ENCODE measurements at regions of chr13 and their contacts with region 1.

Region 1: DNA sequence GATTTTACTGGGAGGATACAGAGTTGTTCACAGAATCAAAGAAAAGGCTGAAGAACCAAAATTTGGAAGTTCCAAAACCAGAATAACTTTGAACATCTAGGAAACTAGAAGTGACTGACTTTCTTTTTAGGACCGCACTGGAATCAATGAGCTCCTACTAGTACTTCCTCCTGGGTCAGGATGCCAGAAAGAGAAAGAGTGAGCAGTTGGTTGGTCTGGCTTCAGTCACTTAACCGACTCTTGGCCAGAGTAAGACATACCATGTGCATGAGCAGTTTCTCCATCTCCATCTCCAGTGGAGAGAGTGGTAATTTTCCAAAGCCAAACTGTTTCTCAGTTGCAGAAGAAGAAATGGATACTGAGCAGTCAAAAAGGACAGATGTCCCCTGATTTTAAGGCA is 27.1 kb upstream of the MTUS2 start:
- DNase-seq: no peak
- H3K4me3 ChIP-seq: no peak overlapping the region
- H3K27ac ChIP-seq: peak overlapping the region in 1 of 2 donors; percentile 21
- H3K4me1 ChIP-seq: peaks cover 0 to 2% of the 10 kb centered on the region in 2 donors
- H3K27me3 ChIP-seq: no peaks in the 10 kb centered on the region
- CTCF ChIP-seq: no peak

Region 2: DNA sequence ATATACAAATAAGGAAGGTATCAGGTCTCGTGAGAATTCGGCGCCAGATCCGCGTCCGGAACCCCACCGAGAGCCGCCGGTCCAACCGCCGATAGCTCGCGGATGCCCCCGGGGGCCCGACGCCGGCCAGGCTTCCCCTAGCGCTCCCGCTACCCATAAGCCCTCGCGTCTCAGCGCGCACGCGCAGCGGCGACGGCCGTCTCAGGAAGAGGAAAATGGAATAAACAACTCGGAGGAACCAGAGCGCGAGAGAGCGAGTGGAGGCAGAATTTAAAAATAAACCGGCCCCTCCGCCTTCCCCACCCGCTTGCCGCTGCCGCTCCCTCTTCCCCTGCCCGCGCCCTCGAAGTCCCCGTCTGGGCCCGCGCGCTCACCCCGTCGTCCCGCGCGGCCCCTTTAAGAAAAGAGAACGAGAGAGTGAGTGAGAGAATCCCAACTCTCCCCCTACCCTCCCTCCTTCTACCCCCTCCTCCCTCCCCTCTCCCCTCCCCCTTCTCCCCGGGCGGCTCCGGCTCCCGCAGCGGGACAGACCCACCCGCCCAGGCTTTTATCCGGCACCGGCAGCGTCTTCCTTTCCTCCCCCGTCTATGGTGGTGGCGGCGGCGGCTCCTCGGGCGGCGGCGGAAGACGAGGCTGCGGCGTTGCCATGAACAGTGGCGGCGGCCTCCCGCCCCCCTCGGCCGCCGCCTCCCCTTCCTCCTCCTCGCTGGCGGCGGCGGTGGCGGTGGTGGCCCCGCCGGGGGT is 654.8 kb before region 1 on chr13 and contains the start of gene PAN3:
- intact Hi-C with region 1: loop called (anchors 10 kb)
- DNase-seq: peak; percentile 72 to 96
- H3K4me3 ChIP-seq: peak within 1 kb of the TSS; percentile 81 to 95
- H3K27ac ChIP-seq: peak within 1 kb of the TSS; percentile 90 to 100
- H3K4me1 ChIP-seq: peaks cover 0 to 16% of the 10 kb centered on the region in 2 donors
- H3K27me3 ChIP-seq: no peaks in the 10 kb centered on the region
- CTCF ChIP-seq: peak in 1 of 3 experiments; percentile 10
- total RNA-seq, gene PAN3: 34.5 TPM

Region 3: DNA sequence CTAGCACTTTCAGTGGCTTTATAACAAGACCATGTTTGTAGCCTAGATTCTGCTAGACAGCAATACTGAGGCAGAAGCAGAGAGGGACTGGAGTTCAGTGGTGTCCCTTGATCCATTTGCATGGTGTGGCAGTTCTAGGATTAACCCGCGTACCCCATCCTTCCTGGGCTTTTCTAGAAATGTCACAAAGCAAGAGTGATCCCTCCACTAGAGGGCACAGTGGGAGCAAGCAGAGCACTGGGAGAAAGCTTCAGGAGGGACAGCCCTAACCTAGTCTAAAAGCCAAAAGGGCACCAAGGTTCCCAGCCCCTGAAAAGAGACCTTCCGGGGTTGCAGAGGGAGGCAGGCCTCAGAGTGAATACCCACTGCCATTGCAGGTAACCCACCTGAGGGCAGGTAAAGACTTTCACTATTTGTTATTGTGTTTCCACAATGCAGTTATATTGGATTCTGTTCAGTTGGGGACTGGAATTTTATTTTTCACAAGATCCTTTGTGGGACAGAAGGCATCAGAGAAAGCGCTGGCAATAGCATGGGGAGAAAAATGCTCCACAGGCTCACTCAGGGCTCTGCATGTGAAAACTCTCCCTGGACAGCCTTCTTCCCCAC is 468.7 kb before region 1 on chr13:
- intact Hi-C with region 1: loop called (anchors 5 kb)
- DNase-seq: peak in 1 of 2 donors; percentile 72
- H3K4me3 ChIP-seq: no peak overlapping the region
- H3K27ac ChIP-seq: no peak overlapping the region
- H3K4me1 ChIP-seq: peaks cover 0 to 4% of the 10 kb centered on the region in 2 donors
- H3K27me3 ChIP-seq: no peaks in the 10 kb centered on the region
- CTCF ChIP-seq: peak; percentile 40 to 71 (median 48)

Region 4: GRCh38 chr13:28658796-28659620 is 134.0 kb before region 1 on chr13 and contains the start of gene POMP:
- intact Hi-C with region 1: loop called (anchors 5 kb)
- DNase-seq: peak; percentile 72 to 96
- H3K4me3 ChIP-seq: peak within 1 kb of the TSS; percentile 91 to 98
- H3K27ac ChIP-seq: peak within 1 kb of the TSS; percentile 92 to 97
- H3K4me1 ChIP-seq: peaks cover 9 to 30% of the 10 kb centered on the region in 2 donors
- H3K27me3 ChIP-seq: no peaks in the 10 kb centered on the region
- CTCF ChIP-seq: no peak
- total RNA-seq, gene POMP: 25.0 TPM

Region 5: GRCh38 chr13:28679628-28680027 is 113.4 kb before region 1 on chr13:
- intact Hi-C with region 1: loop called (anchors 2 kb)
- DNase-seq: no peak
- H3K4me3 ChIP-seq: no peak overlapping the region
- H3K27ac ChIP-seq: no peak overlapping the region
- H3K4me1 ChIP-seq: no peaks in the 10 kb centered on the region
- H3K27me3 ChIP-seq: no peaks in the 10 kb centered on the region
- CTCF ChIP-seq: peak; percentile 17 to 39 (median 28)

Region 6: DNA sequence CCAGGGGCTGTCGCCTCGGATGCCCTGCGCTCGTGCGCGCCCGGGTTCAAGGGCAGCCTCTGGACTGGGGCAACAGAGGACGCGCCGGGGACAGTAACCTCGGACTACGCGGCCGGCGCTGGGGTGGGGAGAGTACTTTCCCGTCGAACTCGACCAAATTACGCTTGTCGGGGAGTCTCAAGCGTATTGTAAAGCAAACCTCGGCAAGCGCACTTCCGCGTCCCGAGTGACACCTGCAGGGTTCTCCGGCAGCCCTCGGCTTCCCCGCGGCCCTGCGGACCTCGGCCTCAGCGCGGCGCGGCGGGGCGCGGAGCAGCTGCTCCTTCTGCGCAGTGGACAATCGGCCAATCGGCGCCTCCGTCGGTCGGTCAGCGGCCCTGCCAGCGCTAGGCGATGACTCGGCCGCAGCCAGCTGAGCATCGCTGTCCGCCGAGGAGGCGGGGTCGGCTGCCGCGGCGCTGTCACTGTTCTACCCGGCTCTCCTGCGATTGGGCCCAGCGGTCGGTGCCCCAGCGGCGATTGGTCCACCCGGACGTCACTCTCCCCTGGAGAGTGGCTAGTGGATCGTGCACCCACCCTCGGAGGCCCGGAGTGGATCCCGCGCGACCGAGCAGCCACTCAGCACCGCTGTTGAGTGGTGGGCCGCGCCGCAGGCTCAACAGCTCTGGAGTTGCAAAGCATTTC is 74.3 kb before region 1 on chr13 and contains the start of gene SLC46A3:
- intact Hi-C with region 1: loop called (anchors 2 kb)
- DNase-seq: peak; percentile 98 to 100
- H3K4me3 ChIP-seq: peak within 1 kb of the TSS; percentile 67 to 91
- H3K27ac ChIP-seq: peak within 1 kb of the TSS; percentile 96 to 97
- H3K4me1 ChIP-seq: peaks cover 0 to 6% of the 10 kb centered on the region in 2 donors
- H3K27me3 ChIP-seq: no peaks in the 10 kb centered on the region
- CTCF ChIP-seq: peak in 2 of 3 experiments; percentile 18 to 26
- total RNA-seq, gene SLC46A3: 2.8 TPM

Region 7: GRCh38 chr13:28753243-28753887 is 39.6 kb before region 1 on chr13:
- intact Hi-C with region 1: loop called (anchors 5 kb)
- DNase-seq: peak; percentile 43 to 86
- H3K4me3 ChIP-seq: no peak overlapping the region
- H3K27ac ChIP-seq: peak overlapping the region; percentile 50 to 69
- H3K4me1 ChIP-seq: peaks cover 3 to 5% of the 10 kb centered on the region in 2 donors
- H3K27me3 ChIP-seq: no peaks in the 10 kb centered on the region
- CTCF ChIP-seq: peak in 2 of 3 experiments; percentile 5 to 10

Region 8: GRCh38 chr13:28843639-28844038 is 50.6 kb after region 1 on chr13:
- intact Hi-C with region 1: no loop called
- DNase-seq: no peak
- H3K4me3 ChIP-seq: no peak overlapping the region
- H3K27ac ChIP-seq: no peak overlapping the region
- H3K4me1 ChIP-seq: peaks cover 0 to 3% of the 10 kb centered on the region in 2 donors
- H3K27me3 ChIP-seq: no peaks in the 10 kb centered on the region
- CTCF ChIP-seq: no peak